CD4-positive, alpha-beta memory T cell (primary cell): ENCODE measurements at regions of chr2 and their contacts with region 1.

Region 1: GRCh38 chr2:204871231-204871953 is 326.1 kb downstream of the PARD3B start:
- DNase-seq: peak in 4 of 5 donors; percentile 37 to 53 (median 44)
- H3K4me3 ChIP-seq: no peak overlapping the region
- H3K4me3 Mint-ChIP-seq: peak overlapping the region in 5 of 8 donors; percentile 0 to 70 (median 1)
- H3K27ac ChIP-seq: no peak overlapping the region
- H3K27ac Mint-ChIP-seq: peak overlapping the region in 2 of 7 donors; percentile 5 to 29
- H3K4me1 ChIP-seq: peaks cover 15% of the 10 kb centered on the region
- H3K4me1 Mint-ChIP-seq: peaks cover 11 to 30% (median 22%) of the 10 kb centered on the region in 4 donors
- H3K27me3 ChIP-seq: no peaks in the 10 kb centered on the region
- H3K27me3 Mint-ChIP-seq: no peaks in the 10 kb centered on the region

Region 2: DNA sequence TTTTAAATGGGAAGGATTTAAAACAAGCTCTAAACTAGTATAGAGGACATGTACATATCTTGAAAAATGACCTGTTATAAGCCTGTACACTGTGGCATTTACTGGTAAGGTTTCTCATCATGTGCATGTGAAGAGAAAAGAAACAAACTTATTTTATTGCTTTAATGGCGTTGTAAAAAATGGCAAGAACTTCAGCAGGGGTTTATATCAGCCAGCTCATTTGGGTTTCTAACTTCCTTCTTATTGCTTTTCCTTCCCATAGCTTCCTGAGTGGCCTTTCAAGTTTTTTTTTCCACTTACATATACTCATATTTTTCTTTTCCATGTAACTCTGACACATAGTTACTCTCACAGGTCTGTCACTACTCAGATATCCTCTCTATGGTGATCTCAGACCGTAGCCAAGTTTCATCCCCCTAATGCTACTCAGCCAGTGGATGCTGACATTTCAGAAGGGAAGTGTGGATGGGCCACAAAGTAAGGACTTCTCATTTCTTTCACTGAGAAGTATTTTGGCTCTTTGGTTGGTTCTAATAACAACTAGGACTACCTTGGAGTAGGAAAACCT is 127.9 kb before region 1 on chr2:
- CTCF ChIA-PET with region 1: no interaction called
- POLR2A ChIA-PET with region 1: no interaction called
- intact Hi-C with region 1: no loop called
- DNase-seq: no peak
- H3K4me3 ChIP-seq: no peak overlapping the region
- H3K4me3 Mint-ChIP-seq: no peak overlapping the region
- H3K27ac ChIP-seq: no peak overlapping the region
- H3K27ac Mint-ChIP-seq: peak overlapping the region in 1 of 7 donors; percentile 11
- H3K4me1 ChIP-seq: no peaks in the 10 kb centered on the region
- H3K4me1 Mint-ChIP-seq: no peaks in the 10 kb centered on the region
- H3K27me3 ChIP-seq: no peaks in the 10 kb centered on the region
- H3K27me3 Mint-ChIP-seq: peaks cover 0 to 1% of the 10 kb centered on the region in 2 donors

Region 3: GRCh38 chr2:204885747-204886146 is 14.4 kb after region 1 on chr2:
- CTCF ChIA-PET with region 1: interaction called, 13 read pairs
- POLR2A ChIA-PET with region 1: interaction called, 4 read pairs
- intact Hi-C with region 1: no loop called
- DNase-seq: no peak
- H3K4me3 ChIP-seq: no peak overlapping the region
- H3K4me3 Mint-ChIP-seq: no peak overlapping the region
- H3K27ac ChIP-seq: no peak overlapping the region
- H3K27ac Mint-ChIP-seq: peak overlapping the region in 1 of 7 donors; percentile 6
- H3K4me1 ChIP-seq: peaks cover 22% of the 10 kb centered on the region
- H3K4me1 Mint-ChIP-seq: peaks cover 17 to 43% (median 23%) of the 10 kb centered on the region in 4 donors
- H3K27me3 ChIP-seq: no peaks in the 10 kb centered on the region
- H3K27me3 Mint-ChIP-seq: no peaks in the 10 kb centered on the region

Region 4: GRCh38 chr2:204958371-204958770 is 87.0 kb after region 1 on chr2:
- CTCF ChIA-PET with region 1: no interaction called
- POLR2A ChIA-PET with region 1: no interaction called
- intact Hi-C with region 1: no loop called
- DNase-seq: peak in 1 of 5 donors; percentile 19
- H3K4me3 ChIP-seq: no peak overlapping the region
- H3K4me3 Mint-ChIP-seq: peak overlapping the region in 6 of 8 donors; percentile 1 to 82 (median 60)
- H3K27ac ChIP-seq: no peak overlapping the region
- H3K27ac Mint-ChIP-seq: peak overlapping the region in 6 of 7 donors; percentile 11 to 83 (median 42)
- H3K4me1 ChIP-seq: peaks cover 19% of the 10 kb centered on the region
- H3K4me1 Mint-ChIP-seq: peaks cover 22 to 36% (median 29%) of the 10 kb centered on the region in 4 donors
- H3K27me3 ChIP-seq: no peaks in the 10 kb centered on the region
- H3K27me3 Mint-ChIP-seq: no peaks in the 10 kb centered on the region

Region 5: GRCh38 chr2:205130111-205130829 is 258.9 kb after region 1 on chr2:
- CTCF ChIA-PET with region 1: interaction called, 31 read pairs
- POLR2A ChIA-PET with region 1: interaction called, 3 read pairs
- intact Hi-C with region 1: loop called (anchors 1 kb)
- DNase-seq: peak in 2 of 5 donors; percentile 5 to 22
- H3K4me3 ChIP-seq: no peak overlapping the region
- H3K4me3 Mint-ChIP-seq: peak overlapping the region in 1 of 8 donors; percentile 18
- H3K27ac ChIP-seq: no peak overlapping the region
- H3K27ac Mint-ChIP-seq: peak overlapping the region in 3 of 7 donors; percentile 6 to 54 (median 29)
- H3K4me1 ChIP-seq: peaks cover 21% of the 10 kb centered on the region
- H3K4me1 Mint-ChIP-seq: peaks cover 14 to 20% (median 18%) of the 10 kb centered on the region in 4 donors
- H3K27me3 ChIP-seq: no peaks in the 10 kb centered on the region
- H3K27me3 Mint-ChIP-seq: no peaks in the 10 kb centered on the region

Region 6: GRCh38 chr2:205193836-205194228 is 322.4 kb after region 1 on chr2:
- CTCF ChIA-PET with region 1: no interaction called
- POLR2A ChIA-PET with region 1: no interaction called
- intact Hi-C with region 1: loop called (anchors 1 kb)
- DNase-seq: no peak
- H3K4me3 ChIP-seq: no peak overlapping the region
- H3K4me3 Mint-ChIP-seq: no peak overlapping the region
- H3K27ac ChIP-seq: no peak overlapping the region
- H3K27ac Mint-ChIP-seq: peak overlapping the region in 1 of 7 donors; percentile 57
- H3K4me1 ChIP-seq: no peaks in the 10 kb centered on the region
- H3K4me1 Mint-ChIP-seq: peaks cover 0 to 5% (median 4%) of the 10 kb centered on the region in 4 donors
- H3K27me3 ChIP-seq: no peaks in the 10 kb centered on the region
- H3K27me3 Mint-ChIP-seq: no peaks in the 10 kb centered on the region

Region 7: GRCh38 chr2:205947621-205948495 is 1076.5 kb after region 1 on chr2:
- CTCF ChIA-PET with region 1: interaction called, 3 read pairs
- POLR2A ChIA-PET with region 1: no interaction called
- intact Hi-C with region 1: loop called (anchors 5 kb)
- DNase-seq: peak in 4 of 5 donors; percentile 18 to 42 (median 33)
- H3K4me3 ChIP-seq: no peak overlapping the region
- H3K4me3 Mint-ChIP-seq: peak overlapping the region in 1 of 8 donors; percentile 23
- H3K27ac ChIP-seq: no peak overlapping the region
- H3K27ac Mint-ChIP-seq: no peak overlapping the region
- H3K4me1 ChIP-seq: no peaks in the 10 kb centered on the region
- H3K4me1 Mint-ChIP-seq: peaks cover 0 to 5% (median 0%) of the 10 kb centered on the region in 4 donors
- H3K27me3 ChIP-seq: no peaks in the 10 kb centered on the region
- H3K27me3 Mint-ChIP-seq: peaks cover 8 to 17% of the 10 kb centered on the region in 2 donors